Activated naive CD4-positive, alpha-beta T cell treated with anti-CD3 and anti-CD28 coated beads for 36 hours (primary cell): ENCODE measurements at regions of chr19 and their contacts with region 1.

Region 1: GRCh38 chr19:44212250-44212865 is at the start of gene ZNF227:
- DNase-seq: peak; percentile 89
- H3K4me3 Mint-ChIP-seq: peak within 1 kb of the TSS; percentile 88
- H3K27ac Mint-ChIP-seq: peak within 1 kb of the TSS; percentile 89
- H3K4me1 Mint-ChIP-seq: peaks cover 17% of the 10 kb centered on the region
- H3K27me3 Mint-ChIP-seq: no peaks in the 10 kb centered on the region
- total RNA-seq, gene ZNF227: 17.9 to 19.4 TPM

Region 2: GRCh38 chr19:43826787-43827754 is 385.3 kb before region 1 on chr19 and contains the start of gene ZNF283:
- CTCF ChIA-PET with region 1: no interaction called
- intact Hi-C with region 1: loop called (anchors 5 kb)
- DNase-seq: peak; percentile 92
- H3K4me3 Mint-ChIP-seq: peak within 1 kb of the TSS; percentile 88
- H3K27ac Mint-ChIP-seq: peak within 1 kb of the TSS; percentile 75
- H3K4me1 Mint-ChIP-seq: peaks cover 17% of the 10 kb centered on the region
- H3K27me3 Mint-ChIP-seq: no peaks in the 10 kb centered on the region
- total RNA-seq, gene ZNF283: 6.8 to 7.7 TPM

Region 3: DNA sequence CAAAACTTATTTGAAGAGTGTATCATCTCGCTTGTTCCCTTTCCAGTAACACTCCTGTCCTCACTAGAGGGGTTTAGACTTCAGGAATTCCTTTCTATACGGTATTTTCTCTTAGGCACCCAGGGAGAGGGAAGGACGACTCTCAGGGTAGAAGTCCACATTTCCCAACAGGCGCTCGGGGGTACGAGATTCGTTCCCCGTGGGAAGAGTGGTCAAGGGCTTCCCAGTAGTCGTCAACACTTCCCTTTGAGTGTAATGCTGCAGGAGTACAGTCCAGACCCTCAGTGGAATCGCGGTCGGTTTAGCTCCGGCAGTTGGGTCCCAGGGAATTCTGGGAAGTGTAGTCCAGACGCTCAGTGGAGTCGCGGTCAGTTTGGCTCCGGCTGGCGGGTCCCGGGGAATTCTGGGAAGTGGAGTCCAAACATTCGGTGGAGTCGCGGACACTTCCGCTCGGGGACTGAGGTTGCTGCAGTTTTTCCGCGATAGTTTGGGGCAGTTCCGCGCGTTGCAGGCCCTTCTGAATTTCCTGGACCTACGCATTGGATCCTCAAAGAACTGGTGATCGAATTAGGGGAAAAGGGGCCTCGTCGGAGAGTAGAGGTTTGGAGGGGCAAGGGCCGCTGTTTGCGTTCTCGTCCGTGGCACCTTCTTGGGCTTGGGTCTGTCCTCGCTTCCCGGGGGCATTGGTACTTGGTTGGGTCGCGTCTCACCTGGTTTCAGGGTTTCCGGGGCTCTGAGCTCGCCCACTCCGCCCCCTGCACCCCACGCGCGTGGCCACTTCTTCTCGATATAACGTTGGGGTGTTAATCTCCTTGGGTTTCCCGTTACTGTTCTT is 118.2 kb before region 1 on chr19 and contains the start of gene ZNF224:
- CTCF ChIA-PET with region 1: no interaction called
- intact Hi-C with region 1: loop called (anchors 1 kb)
- DNase-seq: peak; percentile 91
- H3K4me3 Mint-ChIP-seq: peak within 1 kb of the TSS; percentile 98
- H3K27ac Mint-ChIP-seq: peak within 1 kb of the TSS; percentile 87
- H3K4me1 Mint-ChIP-seq: peaks cover 13% of the 10 kb centered on the region
- H3K27me3 Mint-ChIP-seq: no peaks in the 10 kb centered on the region
- total RNA-seq, gene ZNF224: 8.7 to 10.9 TPM

Region 4: GRCh38 chr19:44141191-44142058 is 70.9 kb before region 1 on chr19 and contains the start of gene ZNF234:
- CTCF ChIA-PET with region 1: no interaction called
- intact Hi-C with region 1: loop called (anchors 2 kb)
- DNase-seq: peak; percentile 72
- H3K4me3 Mint-ChIP-seq: peak within 1 kb of the TSS; percentile 92
- H3K27ac Mint-ChIP-seq: peak within 1 kb of the TSS; percentile 85
- H3K4me1 Mint-ChIP-seq: peaks cover 16% of the 10 kb centered on the region
- H3K27me3 Mint-ChIP-seq: no peaks in the 10 kb centered on the region
- total RNA-seq, gene ZNF234: 5.0 to 5.4 TPM

Region 5: DNA sequence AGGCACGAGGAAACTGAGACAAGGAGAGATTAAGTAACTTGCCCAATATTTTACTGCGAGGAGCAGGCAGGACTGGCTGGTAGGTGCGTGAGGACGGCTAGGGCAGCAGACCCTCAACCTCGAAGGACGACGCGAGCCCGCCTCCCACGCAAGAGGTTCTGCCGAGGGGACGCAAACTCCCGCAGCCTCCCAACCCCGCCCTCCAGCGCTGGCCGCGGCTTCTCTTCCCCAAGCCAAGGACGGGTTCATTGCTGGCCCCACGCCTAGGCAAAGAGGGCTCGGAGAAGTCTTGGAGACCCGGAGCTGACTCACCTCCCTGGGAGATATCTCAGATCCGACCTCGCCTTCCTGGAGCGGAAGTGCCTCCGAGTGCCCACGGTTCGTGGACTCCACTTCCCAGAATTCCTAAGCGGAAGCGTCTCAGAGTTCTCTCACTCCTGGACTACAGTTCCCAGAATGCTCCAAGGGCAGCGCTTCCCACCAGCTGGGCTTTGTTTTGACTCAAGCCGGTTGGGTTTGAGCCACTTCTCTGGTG is 92.4 kb after region 1 on chr19 and contains the start of gene ZNF235:
- CTCF ChIA-PET with region 1: no interaction called
- intact Hi-C with region 1: loop called (anchors 2 kb)
- DNase-seq: peak; percentile 87
- H3K4me3 Mint-ChIP-seq: peak within 1 kb of the TSS; percentile 77
- H3K27ac Mint-ChIP-seq: peak within 1 kb of the TSS; percentile 16
- H3K4me1 Mint-ChIP-seq: peaks cover 9% of the 10 kb centered on the region
- H3K27me3 Mint-ChIP-seq: no peaks in the 10 kb centered on the region
- total RNA-seq, gene ZNF235: 1.5 to 1.6 TPM

Region 6: GRCh38 chr19:44500148-44500956 is 288.0 kb after region 1 on chr19 and contains the start of gene ZNF180:
- CTCF ChIA-PET with region 1: no interaction called
- intact Hi-C with region 1: loop called (anchors 5 kb)
- DNase-seq: peak; percentile 96
- H3K4me3 Mint-ChIP-seq: peak within 1 kb of the TSS; percentile 86
- H3K27ac Mint-ChIP-seq: peak within 1 kb of the TSS; percentile 83
- H3K4me1 Mint-ChIP-seq: peaks cover 30% of the 10 kb centered on the region
- H3K27me3 Mint-ChIP-seq: peaks cover 4% of the 10 kb centered on the region
- total RNA-seq, gene ZNF180: 3.3 to 5.2 TPM